H1 (cell line): ENCODE measurements at regions of chr7 and their contacts with region 1.

Region 1: DNA sequence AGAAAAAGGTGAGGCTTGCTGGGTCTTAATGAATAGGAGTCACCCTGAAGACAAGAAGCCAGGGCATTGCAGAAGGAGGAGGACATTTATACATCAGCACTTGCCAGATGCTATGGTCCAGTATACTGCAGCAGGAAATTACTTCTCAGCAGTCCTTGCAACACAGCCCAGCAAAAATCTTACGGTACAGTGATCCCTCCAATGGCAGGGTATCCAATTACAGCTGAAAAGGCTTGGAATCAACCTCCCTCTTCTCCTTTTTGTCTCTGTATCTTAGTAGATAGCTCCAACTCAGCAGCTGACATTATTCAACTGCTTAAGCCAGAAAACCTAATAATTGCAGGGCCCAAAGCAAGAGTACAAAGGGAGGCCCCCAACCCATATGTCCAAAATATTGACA is 128.3 kb upstream of the COBL start:
- DNase-seq: no peak
- H3K4me3 ChIP-seq: no peak overlapping the region
- H3K27ac ChIP-seq: no peak overlapping the region
- H3K4me1 ChIP-seq: peaks cover 0 to 10% (median 1%) of the 10 kb centered on the region in 4 experiments; a peak in 4 of 7 replicates
- H3K27me3 ChIP-seq: no peaks in the 10 kb centered on the region
- CTCF ChIP-seq: no peak
- EP300 ChIP-seq: no peak
- POLR2A ChIP-seq: no peak
- RAD21 ChIP-seq: no peak

Region 2: DNA sequence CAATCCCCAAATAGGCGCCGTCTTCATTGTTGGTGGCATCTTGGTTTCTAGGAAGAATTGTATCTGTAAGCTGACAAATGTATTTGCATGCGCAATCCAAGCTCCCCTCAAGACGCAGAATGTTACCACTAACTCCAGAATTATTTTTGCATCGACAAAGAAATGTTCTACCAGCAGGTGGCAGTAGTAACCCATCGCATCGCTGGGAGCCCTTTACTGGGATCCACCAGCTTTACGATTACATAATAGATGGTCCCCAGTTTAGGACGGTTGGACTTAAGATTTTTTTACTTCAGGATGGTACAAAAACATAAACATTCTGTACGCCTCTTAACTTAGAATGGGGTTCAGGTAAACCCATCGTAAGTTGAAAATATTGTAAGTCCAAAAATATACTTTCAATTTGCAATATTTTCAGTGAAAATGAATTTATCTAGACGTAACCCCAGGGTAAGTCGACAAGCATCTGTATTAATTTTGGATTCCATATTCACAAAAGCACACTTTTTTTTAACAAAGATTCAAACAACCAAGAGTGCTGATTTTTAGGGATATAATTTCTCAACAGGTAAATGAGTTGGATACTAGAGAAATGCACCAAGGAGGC is 14.4 kb before region 1 on chr7:
- CTCF ChIA-PET with region 1: interaction called, 41 read pairs
- POLR2A ChIA-PET with region 1: no interaction called
- DNase-seq: peak in 1 of 2 experiments; percentile 85
- H3K4me3 ChIP-seq: no peak overlapping the region
- H3K27ac ChIP-seq: no peak overlapping the region
- H3K4me1 ChIP-seq: no peaks in the 10 kb centered on the region; a peak in 2 of 7 replicates
- H3K27me3 ChIP-seq: no peaks in the 10 kb centered on the region; a peak in 1 of 7 replicates
- CTCF ChIP-seq: peak; percentile 43 to 83 (median 75)
- EP300 ChIP-seq: no peak
- POLR2A ChIP-seq: no peak
- RAD21 ChIP-seq: peak; percentile 98 to 99

Region 3: GRCh38 chr7:51517187-51517586 is 72.3 kb after region 1 on chr7:
- CTCF ChIA-PET with region 1: no interaction called
- POLR2A ChIA-PET with region 1: no interaction called
- DNase-seq: no peak
- H3K4me3 ChIP-seq: no peak overlapping the region
- H3K27ac ChIP-seq: no peak overlapping the region
- H3K4me1 ChIP-seq: no peaks in the 10 kb centered on the region; a peak in 1 of 7 replicates
- H3K27me3 ChIP-seq: no peaks in the 10 kb centered on the region
- CTCF ChIP-seq: no peak
- EP300 ChIP-seq: no peak
- POLR2A ChIP-seq: no peak
- RAD21 ChIP-seq: no peak